ENCODE measurements at regions of chr3 and their contacts with region 1.

Region 1: DNA sequence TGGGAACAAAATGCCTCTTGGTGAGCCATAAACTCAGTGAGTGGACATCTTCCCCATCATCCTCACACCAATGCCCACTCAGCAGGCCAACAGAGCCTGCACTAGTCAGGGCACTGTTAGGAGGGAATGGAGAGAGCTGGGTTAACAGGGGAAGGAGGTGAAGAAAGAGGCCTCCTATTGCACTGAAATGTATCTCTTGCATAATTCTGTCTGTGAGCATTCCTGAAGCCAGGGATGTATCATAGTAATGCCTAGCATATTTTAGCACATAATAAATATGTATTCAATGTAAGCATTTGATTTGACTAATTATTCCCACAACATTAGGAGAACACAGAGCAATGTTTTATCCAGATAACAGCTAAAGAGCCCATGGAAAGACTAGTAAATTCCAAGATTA is 81.2 kb downstream of the ANO10 start:
- DNase-seq: no peak
- H3K4me3 ChIP-seq: no peak overlapping the region
- H3K4me3 Mint-ChIP-seq: no peak overlapping the region
- H3K27ac Mint-ChIP-seq: no peak overlapping the region
- H3K4me1 ChIP-seq: no peaks in the 10 kb centered on the region
- H3K4me1 Mint-ChIP-seq: no peaks in the 10 kb centered on the region
- H3K27me3 ChIP-seq: no peaks in the 10 kb centered on the region
- H3K27me3 Mint-ChIP-seq: no peaks in the 10 kb centered on the region
- CTCF ChIP-seq: no peak

Region 2: DNA sequence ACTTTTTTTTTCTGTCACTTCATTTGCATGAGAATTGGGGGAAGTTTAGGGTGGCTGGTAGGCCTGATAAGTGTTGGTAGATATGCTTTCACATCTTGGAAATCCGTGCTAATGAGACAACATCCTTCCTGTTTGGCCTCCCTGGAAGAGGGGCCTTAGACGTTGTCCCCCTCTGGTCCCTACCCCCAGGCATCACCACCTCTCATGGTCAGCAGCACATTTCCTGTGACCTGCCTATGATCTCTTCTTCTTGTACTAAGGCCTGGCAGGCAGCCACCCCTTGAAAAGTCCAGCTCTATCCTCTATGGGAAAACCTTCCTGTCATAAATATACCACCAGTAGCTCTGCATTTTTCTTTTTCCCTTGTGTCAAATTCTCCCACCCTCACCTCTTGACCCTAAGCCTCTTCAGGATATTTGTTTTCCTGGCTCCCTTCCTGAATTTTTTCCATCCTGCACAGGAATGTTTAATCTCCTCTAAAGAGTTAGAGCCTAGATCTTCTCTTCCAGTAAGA is 146.5 kb before region 1 on chr3:
- CTCF ChIA-PET with region 1: no interaction called
- POLR2A ChIA-PET with region 1: no interaction called
- intact Hi-C with region 1: no loop called
- DNase-seq: no peak
- H3K4me3 ChIP-seq: no peak overlapping the region
- H3K4me3 Mint-ChIP-seq: no peak overlapping the region
- H3K27ac Mint-ChIP-seq: no peak overlapping the region
- H3K4me1 ChIP-seq: no peaks in the 10 kb centered on the region
- H3K4me1 Mint-ChIP-seq: no peaks in the 10 kb centered on the region
- H3K27me3 ChIP-seq: no peaks in the 10 kb centered on the region
- H3K27me3 Mint-ChIP-seq: no peaks in the 10 kb centered on the region
- CTCF ChIP-seq: no peak

Region 3: DNA sequence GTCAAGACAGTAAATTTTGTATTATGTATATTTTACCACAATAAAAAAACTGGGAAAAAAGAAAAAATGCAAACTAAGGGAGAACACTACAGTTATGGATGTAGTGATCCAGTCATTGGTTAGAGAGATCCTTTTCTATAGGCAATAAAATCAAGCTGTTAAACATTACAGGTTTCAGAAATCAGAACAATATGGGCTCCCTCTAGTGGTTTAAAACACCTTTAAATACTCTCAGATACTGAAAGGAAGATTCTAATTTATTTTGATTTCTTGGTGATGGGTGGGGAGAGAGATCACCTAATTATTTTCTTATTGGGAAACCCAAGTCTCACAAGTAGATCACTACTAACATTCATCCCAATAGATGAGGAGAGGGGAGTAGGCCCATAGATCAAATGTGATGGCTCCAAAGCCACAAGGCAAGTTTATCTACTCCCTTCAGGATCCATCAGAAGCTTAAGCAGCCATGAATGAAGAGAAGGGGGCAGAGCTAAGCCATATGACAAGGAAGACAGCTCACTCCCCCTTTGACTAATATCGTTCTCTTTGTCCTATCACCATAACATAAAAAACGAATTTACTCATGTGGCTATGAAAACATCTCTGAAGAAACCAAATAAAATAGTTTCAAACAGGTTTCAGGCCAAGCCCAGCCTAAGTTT is 37.4 kb before region 1 on chr3:
- CTCF ChIA-PET with region 1: no interaction called
- POLR2A ChIA-PET with region 1: no interaction called
- intact Hi-C with region 1: no loop called
- DNase-seq: no peak
- H3K4me3 ChIP-seq: no peak overlapping the region
- H3K4me3 Mint-ChIP-seq: no peak overlapping the region
- H3K27ac Mint-ChIP-seq: no peak overlapping the region
- H3K4me1 ChIP-seq: no peaks in the 10 kb centered on the region
- H3K4me1 Mint-ChIP-seq: no peaks in the 10 kb centered on the region
- H3K27me3 ChIP-seq: no peaks in the 10 kb centered on the region
- H3K27me3 Mint-ChIP-seq: no peaks in the 10 kb centered on the region
- CTCF ChIP-seq: peak in 1 of 2 experiments; percentile 49

Region 4: GRCh38 chr3:43638594-43639447 is 98.2 kb after region 1 on chr3:
- CTCF ChIA-PET with region 1: no interaction called
- POLR2A ChIA-PET with region 1: no interaction called
- intact Hi-C with region 1: loop called (anchors 1 kb)
- DNase-seq: peak; percentile 45 to 47
- H3K4me3 ChIP-seq: no peak overlapping the region
- H3K4me3 Mint-ChIP-seq: peak overlapping the region; percentile 62
- H3K27ac Mint-ChIP-seq: peak overlapping the region; percentile 35
- H3K4me1 ChIP-seq: peaks cover 10% of the 10 kb centered on the region; the same call in 1 of the 2 replicates
- H3K4me1 Mint-ChIP-seq: peaks cover 6% of the 10 kb centered on the region
- H3K27me3 ChIP-seq: no peaks in the 10 kb centered on the region
- H3K27me3 Mint-ChIP-seq: no peaks in the 10 kb centered on the region
- CTCF ChIP-seq: peak; percentile 11 to 14

Region 5: GRCh38 chr3:43742920-43743319 is 202.3 kb after region 1 on chr3:
- CTCF ChIA-PET with region 1: no interaction called
- POLR2A ChIA-PET with region 1: no interaction called
- intact Hi-C with region 1: loop called (anchors 2 kb)
- DNase-seq: no peak
- H3K4me3 ChIP-seq: no peak overlapping the region
- H3K4me3 Mint-ChIP-seq: no peak overlapping the region
- H3K27ac Mint-ChIP-seq: no peak overlapping the region
- H3K4me1 ChIP-seq: peaks cover under 1% of the 10 kb centered on the region; the same call in 1 of the 2 replicates
- H3K4me1 Mint-ChIP-seq: no peaks in the 10 kb centered on the region
- H3K27me3 ChIP-seq: no peaks in the 10 kb centered on the region
- H3K27me3 Mint-ChIP-seq: peaks cover 3% of the 10 kb centered on the region
- CTCF ChIP-seq: no peak

Region 6: GRCh38 chr3:43759297-43759782 is 218.7 kb after region 1 on chr3:
- CTCF ChIA-PET with region 1: no interaction called
- POLR2A ChIA-PET with region 1: no interaction called
- intact Hi-C with region 1: loop called (anchors 5 kb)
- DNase-seq: peak; percentile 64 to 80
- H3K4me3 ChIP-seq: no peak overlapping the region
- H3K4me3 Mint-ChIP-seq: peak overlapping the region; percentile 64
- H3K27ac Mint-ChIP-seq: peak overlapping the region; percentile 89
- H3K4me1 ChIP-seq: peaks cover 33% of the 10 kb centered on the region
- H3K4me1 Mint-ChIP-seq: peaks cover 31% of the 10 kb centered on the region
- H3K27me3 ChIP-seq: no peaks in the 10 kb centered on the region
- H3K27me3 Mint-ChIP-seq: no peaks in the 10 kb centered on the region
- CTCF ChIP-seq: peak in 1 of 2 experiments; percentile 27

Measured in Caco-2 (cell line).